ENCODE measurements at regions of chr9 and their contacts with region 1.

Region 1: DNA sequence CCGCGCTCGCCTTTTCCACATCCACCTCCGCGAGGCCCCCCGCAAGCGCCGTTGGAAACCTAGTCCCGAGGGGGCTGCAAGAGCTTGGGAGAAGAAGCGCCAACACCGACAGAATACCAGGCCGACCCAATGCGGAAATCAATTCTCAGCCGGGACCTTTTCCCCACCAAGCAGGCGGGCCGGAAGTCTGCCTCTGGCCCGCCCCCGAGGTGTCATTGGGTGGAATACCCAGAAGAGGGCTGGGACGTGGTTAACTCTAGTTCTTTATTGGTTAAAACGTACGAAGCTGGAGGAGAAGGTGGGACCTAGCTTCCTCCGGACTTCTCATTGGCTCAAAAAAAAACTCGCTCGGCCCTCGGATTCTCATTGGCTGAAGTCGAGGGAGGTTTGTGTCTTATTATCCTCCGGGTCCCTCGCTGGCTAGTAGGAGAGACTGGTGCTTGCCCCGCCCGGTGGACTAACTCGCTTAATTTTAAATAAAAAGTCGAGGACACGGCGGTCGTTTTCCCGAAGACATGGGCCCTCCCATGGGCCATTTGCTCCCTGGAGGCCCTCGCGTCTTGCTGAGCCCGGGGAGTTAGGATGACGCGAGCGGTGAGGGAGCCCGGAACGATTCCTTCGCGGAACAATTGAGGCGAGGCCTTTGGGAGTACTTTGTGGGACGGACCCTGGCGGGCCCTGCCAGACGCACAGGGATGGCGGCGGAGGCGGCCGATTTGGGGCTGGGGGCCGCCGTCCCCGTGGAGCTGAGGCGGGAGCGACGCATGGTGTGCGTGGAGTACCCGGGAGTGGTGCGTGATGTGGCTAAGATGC is at the start of gene GTF3C5:
- DNase-seq: peak; percentile 96 to 99 (median 97)
- ATAC-seq: peak; percentile 98
- H3K4me3 ChIP-seq: peak within 1 kb of the TSS; percentile 99
- H3K27ac ChIP-seq: peak within 1 kb of the TSS; percentile 93
- H3K4me1 ChIP-seq: peaks cover 26 to 33% of the 10 kb centered on the region in 2 experiments; a peak in 4 of 5 replicates
- H3K27me3 ChIP-seq: no peaks in the 10 kb centered on the region
- CTCF ChIP-seq: no peak
- EP300 ChIP-seq: no peak
- POLR2A ChIP-seq: peak; percentile 81
- RAD21 ChIP-seq: 0 out of 4 replicates have a peak, but pooled peaks of 1 of the 2 experiments have one; percentile 5
- polyA plus RNA-seq, gene GTF3C5: 3.8 to 8.4 TPM

Region 2: GRCh38 chr9:133044661-133045060 is 14.1 kb after region 1 on chr9:
- CTCF ChIA-PET with region 1: no interaction called
- POLR2A ChIA-PET with region 1: interaction called, 15 read pairs
- in situ Hi-C with region 1: no loop called
- intact Hi-C with region 1: no loop called
- DNase-seq: no peak
- ATAC-seq: no peak
- H3K4me3 ChIP-seq: no peak overlapping the region
- H3K27ac ChIP-seq: no peak overlapping the region
- H3K4me1 ChIP-seq: peaks cover 0 to 9% of the 10 kb centered on the region in 2 experiments; a peak in 2 of 5 replicates
- H3K27me3 ChIP-seq: no peaks in the 10 kb centered on the region
- CTCF ChIP-seq: no peak
- EP300 ChIP-seq: no peak
- POLR2A ChIP-seq: no peak
- RAD21 ChIP-seq: no peak

Region 3: DNA sequence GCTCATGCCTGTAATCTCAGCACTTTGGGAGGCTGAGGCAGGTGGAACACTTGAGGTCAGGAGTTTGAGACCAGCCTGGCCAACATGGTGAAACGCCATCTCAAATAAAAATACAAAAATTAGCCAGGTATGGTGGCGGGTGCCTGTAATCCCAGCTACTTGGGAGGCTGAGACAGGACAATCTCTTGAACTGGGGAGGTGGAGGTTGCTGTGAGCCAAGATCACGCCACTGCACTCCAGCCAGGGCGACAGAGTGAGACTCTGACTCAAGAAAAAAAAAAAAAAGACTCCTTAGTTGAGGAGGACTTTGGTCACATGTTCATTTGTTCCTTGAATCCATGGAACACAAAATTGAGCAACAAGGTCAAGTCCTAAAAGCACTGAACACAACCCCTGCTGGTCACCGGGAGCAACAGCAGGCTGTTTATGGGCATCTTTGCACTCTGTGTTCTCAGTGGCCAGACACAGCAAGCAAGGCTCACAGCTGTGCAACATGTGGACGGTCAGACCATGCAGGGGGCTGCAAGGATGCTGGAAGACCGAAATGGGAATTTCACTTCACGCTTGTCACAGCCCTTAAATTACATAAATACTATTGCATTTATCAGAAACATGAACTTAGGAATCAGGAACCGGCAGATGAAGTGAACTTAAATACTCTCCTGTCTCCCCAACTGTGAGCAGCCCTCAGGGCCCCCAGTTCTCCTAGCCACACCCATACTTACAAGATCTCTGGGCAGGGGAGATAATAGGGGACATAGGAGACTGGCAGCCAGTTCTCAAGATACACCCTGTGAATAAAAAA is 130.4 kb after region 1 on chr9:
- CTCF ChIA-PET with region 1: no interaction called
- POLR2A ChIA-PET with region 1: no interaction called
- in situ Hi-C with region 1: no loop called
- intact Hi-C with region 1: no loop called
- DNase-seq: peak; percentile 66 to 86 (median 74)
- ATAC-seq: peak; percentile 83
- H3K4me3 ChIP-seq: no peak overlapping the region
- H3K27ac ChIP-seq: peak overlapping the region; percentile 42; the same call in 2 of the 3 replicates
- H3K4me1 ChIP-seq: peaks cover 33 to 56% of the 10 kb centered on the region in 2 experiments; a peak in 4 of 5 replicates
- H3K27me3 ChIP-seq: no peaks in the 10 kb centered on the region
- CTCF ChIP-seq: peak; percentile 81 to 86 (median 81)
- EP300 ChIP-seq: no peak
- POLR2A ChIP-seq: no peak
- RAD21 ChIP-seq: peak; percentile 28 to 40; a peak in 2 of 4 replicates

Measured in K562 (cell line).